ENCODE measurements at regions of chr5 and their contacts with region 1.

Region 1: GRCh38 chr5:148730943-148731861 is 76.9 kb upstream of the HTR4 start:
- DNase-seq: peak in 1 of 2 donors; percentile 88
- ATAC-seq: peak; percentile 61 to 90 (median 87)
- H3K4me3 ChIP-seq: peak overlapping the region in 3 of 10 donors; percentile 13 to 31 (median 22)
- H3K27ac ChIP-seq: no peak overlapping the region
- H3K4me1 ChIP-seq: peaks cover 0 to 27% (median 6%) of the 10 kb centered on the region in 9 donors
- H3K27me3 ChIP-seq: no peaks in the 10 kb centered on the region
- CTCF ChIP-seq: peak; percentile 88 to 99 (median 95)

Region 2: GRCh38 chr5:148179234-148179824 is 551.9 kb before region 1 on chr5:
- intact Hi-C with region 1: loop called (anchors 1 to 10 kb)
- DNase-seq: peak in 1 of 2 donors; percentile 8
- ATAC-seq: peak in 4 of 8 donors; percentile 44 to 60 (median 54)
- H3K4me3 ChIP-seq: no peak overlapping the region
- H3K27ac ChIP-seq: no peak overlapping the region
- H3K4me1 ChIP-seq: no peaks in the 10 kb centered on the region
- H3K27me3 ChIP-seq: no peaks in the 10 kb centered on the region
- CTCF ChIP-seq: peak; percentile 40 to 86 (median 79)

Region 3: DNA sequence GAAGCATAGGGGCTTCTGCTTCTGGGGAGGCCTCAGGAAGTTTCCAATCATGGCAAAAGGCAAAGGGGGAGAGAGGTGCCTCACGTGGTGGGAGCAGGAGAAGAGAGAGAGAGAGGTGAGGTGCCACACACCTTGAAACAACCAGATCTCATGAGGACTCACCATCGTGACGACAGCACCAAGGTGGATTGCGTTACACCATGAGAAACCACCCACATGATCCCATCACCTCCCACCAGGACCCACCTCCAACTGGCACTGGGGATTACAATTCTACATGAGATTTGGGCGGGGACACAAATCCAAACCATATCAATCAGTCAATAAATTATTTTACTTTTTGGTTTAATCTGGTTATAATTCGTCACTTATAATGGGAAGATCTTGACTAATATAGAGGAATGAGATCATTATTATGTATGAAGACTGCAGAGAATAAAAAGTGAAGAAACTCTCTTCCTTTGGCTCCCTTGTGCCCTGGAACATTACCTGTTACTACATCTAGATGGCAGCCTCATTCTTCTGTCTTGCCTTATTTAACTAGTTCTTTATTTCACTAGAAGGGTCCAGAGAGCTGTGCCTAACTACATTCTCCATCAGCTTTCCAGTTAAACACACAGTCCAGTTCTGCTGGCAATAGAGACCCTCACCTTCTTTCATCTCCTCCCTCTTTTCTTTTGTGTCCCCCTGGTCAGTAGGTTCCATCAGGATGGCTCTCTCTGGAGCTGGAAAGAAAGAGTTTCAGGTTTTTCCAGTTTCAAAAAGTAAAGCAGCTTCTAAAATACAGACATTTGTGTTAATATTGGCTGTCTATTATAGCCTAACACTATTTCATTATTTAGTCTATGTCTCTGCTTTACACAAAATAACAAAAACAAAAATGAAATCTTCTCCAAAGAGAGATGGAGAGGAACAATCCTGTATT is 440.7 kb before region 1 on chr5:
- intact Hi-C with region 1: loop called in 5 of 10 experiments (anchors 2 to 10 kb)
- DNase-seq: no peak
- ATAC-seq: peak in 5 of 8 donors; percentile 16 to 72 (median 65)
- H3K4me3 ChIP-seq: no peak overlapping the region
- H3K27ac ChIP-seq: no peak overlapping the region
- H3K4me1 ChIP-seq: no peaks in the 10 kb centered on the region
- H3K27me3 ChIP-seq: no peaks in the 10 kb centered on the region
- CTCF ChIP-seq: peak; percentile 15 to 69 (median 49)

Region 4: GRCh38 chr5:148569948-148570347 is 161.3 kb before region 1 on chr5:
- intact Hi-C with region 1: loop called in 1 of 10 experiments (anchors 10 kb)
- DNase-seq: no peak
- ATAC-seq: peak in 1 of 8 donors; percentile 22
- H3K4me3 ChIP-seq: no peak overlapping the region
- H3K27ac ChIP-seq: no peak overlapping the region
- H3K4me1 ChIP-seq: peaks cover 0 to 6% (median 0%) of the 10 kb centered on the region in 9 donors
- H3K27me3 ChIP-seq: no peaks in the 10 kb centered on the region
- CTCF ChIP-seq: no peak

Region 5: DNA sequence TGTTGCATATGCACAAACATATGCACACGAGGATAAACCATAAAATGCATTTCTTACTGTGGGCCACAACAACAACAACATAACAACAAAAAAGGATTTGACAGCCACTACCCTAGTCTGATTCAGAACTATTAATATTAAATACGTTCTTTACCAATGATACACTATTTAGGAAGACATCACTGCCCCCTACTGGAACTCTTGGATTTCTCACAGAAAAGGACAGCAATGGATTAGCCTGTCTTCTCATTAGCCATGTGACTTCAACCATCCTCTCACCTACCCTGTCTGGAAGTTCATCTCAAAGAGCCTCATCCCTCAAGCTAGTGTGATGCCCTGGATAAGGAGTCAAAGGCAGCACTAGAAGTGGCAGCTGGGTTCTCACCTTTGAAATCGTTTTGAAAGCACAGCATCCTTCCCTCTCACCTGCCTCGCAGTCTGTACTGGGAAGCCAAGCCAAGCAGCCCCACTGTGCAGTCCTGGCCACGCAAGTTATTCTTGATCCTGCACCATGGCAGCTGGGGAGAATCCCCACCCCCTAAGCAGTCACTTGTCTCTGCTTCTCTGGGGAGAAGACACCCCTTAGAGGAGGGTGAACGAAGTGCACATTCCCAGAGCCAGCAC is 267.1 kb after region 1 on chr5:
- intact Hi-C with region 1: loop called in 6 of 10 experiments (anchors 2 to 10 kb)
- DNase-seq: peak in 1 of 2 donors; percentile 49
- ATAC-seq: peak in 7 of 8 donors; percentile 39 to 66 (median 53)
- H3K4me3 ChIP-seq: no peak overlapping the region
- H3K27ac ChIP-seq: no peak overlapping the region
- H3K4me1 ChIP-seq: peaks cover 0 to 35% (median 9%) of the 10 kb centered on the region in 9 donors
- H3K27me3 ChIP-seq: no peaks in the 10 kb centered on the region
- CTCF ChIP-seq: peak; percentile 42 to 77 (median 69)

Region 6: DNA sequence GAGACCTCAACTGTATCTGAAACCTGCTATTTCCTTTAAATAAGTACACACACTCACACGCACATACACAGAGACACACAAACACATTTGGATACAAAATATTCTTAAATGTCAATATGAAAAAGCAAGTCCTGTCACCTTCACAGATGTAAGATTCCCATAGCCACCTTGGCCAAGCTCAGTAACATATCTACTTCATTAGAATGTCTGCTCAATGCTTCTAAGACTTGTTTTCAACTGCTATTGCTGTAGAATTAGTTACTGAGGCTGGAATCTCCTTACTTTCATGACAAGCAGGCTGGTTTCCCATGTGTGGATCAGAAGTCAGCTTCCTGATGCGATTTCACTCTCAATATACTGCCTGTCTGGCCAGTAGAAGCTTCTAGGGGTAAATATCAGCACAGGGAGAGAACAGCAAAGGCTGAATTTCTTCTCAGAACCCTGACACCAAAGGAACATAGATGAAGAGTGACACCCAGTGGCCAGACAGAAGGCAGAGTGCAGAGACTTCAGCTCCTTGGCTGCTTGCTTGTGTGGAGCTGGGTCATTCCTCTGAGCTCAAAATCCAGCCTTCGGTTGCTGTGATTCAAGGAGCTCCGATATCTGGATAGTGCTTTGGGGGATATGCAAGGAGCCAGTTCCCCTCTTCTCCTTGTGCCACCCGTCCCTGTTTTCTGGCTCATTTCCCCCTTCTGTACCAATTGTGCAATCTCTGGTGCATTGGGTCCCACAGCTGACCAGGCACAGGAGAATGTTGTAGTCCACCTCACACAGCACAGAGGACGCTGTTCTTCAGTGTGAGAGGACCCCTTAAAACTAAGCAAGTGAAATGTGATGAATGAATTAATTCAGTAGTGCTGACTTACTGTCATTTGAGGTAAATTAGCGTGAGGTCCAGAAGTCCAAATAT is 383.5 kb after region 1 on chr5:
- intact Hi-C with region 1: loop called (anchors 1 to 10 kb)
- DNase-seq: peak in 1 of 2 donors; percentile 76
- ATAC-seq: peak; percentile 91 to 98 (median 95)
- H3K4me3 ChIP-seq: no peak overlapping the region
- H3K27ac ChIP-seq: peak overlapping the region in 6 of 10 donors; percentile 43 to 73 (median 59)
- H3K4me1 ChIP-seq: peaks cover 0 to 12% (median 6%) of the 10 kb centered on the region in 9 donors
- H3K27me3 ChIP-seq: no peaks in the 10 kb centered on the region
- CTCF ChIP-seq: peak; percentile 54 to 88 (median 75)

Measured in heart right ventricle (tissue), 16 donors.